Activated CD8-positive, alpha-beta memory T cell treated with anti-CD3 and anti-CD28 coated beads, Interleukin-2, amount 10 ng/mL, durations not matched to agents 7 days and 5 days (primary cell): ENCODE measurements at regions of chr20 and their contacts with region 1.

Region 1: DNA sequence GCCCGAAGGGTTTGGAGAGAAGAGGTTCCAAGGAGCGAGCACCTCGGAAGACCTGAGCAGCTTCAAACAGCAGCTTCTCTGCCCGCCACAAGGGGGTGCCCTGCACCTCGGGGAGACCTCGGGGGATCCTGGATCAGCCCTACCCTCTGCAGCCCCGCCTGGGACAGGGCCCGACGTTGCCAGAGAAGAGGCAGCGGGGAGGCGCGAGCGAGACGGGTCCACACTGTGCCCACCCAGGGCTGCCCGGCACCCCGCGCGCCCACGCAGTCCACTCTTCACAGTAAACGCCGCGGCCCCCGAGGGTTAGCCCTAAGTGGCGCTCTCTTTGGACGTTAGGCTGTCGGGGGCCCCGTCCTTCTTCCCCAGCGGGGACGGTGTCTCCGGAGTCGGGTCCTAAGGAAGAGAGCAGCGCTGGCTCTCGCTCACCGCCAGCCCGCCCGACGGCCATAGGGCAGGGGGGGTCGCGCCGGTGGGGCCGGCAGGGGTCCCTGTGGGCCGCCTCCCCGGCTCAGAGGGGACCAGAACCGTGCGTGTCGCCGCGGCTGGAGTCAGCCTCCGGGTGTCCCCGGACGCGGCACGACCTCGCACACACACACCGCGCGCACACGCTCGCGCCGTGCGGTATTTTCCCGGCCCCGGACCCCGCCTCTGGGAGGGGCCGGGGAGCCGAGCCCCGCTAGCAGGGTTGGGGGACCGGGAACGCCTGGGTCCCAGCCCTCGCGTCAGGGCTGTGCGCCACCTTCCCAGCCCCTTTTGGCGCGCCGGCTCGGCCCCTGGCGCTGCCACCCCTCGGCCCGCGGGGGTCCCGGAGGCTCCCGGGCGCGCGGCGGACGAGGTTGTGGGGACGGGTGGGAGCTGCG is 929 bp downstream of the CDH22 start:
- DNase-seq: peak; percentile 80
- ATAC-seq: peak; percentile 87
- H3K4me3 Mint-ChIP-seq: no peak overlapping the region
- H3K27ac Mint-ChIP-seq: no peak overlapping the region
- H3K4me1 Mint-ChIP-seq: peaks cover 5% of the 10 kb centered on the region
- H3K27me3 Mint-ChIP-seq: peaks cover 67% of the 10 kb centered on the region

Region 2: DNA sequence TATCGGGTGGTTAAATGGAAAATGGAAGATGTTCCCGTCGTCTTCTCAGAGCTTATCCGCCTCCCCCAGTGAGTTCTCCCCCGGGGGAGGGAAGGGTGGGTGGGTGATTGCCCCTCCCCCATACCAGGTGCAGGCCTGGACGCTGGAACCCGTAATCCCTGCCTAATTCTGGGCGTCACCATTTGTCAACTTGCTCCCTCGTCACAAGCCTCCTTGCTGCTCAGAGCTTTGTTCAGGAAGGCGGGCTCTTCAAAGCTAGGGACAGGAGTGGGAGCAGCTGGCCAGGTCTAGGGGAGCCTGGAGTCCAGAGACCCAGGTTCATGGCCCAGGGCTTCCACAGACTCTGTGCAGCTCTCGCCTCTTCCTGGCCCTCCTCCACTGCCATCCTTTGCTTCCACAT is 24.7 kb before region 1 on chr20:
- CTCF ChIA-PET with region 1: no interaction called
- DNase-seq: no peak
- ATAC-seq: no peak
- H3K4me3 Mint-ChIP-seq: no peak overlapping the region
- H3K27ac Mint-ChIP-seq: no peak overlapping the region
- H3K4me1 Mint-ChIP-seq: no peaks in the 10 kb centered on the region
- H3K27me3 Mint-ChIP-seq: peaks cover 39% of the 10 kb centered on the region

Region 3: DNA sequence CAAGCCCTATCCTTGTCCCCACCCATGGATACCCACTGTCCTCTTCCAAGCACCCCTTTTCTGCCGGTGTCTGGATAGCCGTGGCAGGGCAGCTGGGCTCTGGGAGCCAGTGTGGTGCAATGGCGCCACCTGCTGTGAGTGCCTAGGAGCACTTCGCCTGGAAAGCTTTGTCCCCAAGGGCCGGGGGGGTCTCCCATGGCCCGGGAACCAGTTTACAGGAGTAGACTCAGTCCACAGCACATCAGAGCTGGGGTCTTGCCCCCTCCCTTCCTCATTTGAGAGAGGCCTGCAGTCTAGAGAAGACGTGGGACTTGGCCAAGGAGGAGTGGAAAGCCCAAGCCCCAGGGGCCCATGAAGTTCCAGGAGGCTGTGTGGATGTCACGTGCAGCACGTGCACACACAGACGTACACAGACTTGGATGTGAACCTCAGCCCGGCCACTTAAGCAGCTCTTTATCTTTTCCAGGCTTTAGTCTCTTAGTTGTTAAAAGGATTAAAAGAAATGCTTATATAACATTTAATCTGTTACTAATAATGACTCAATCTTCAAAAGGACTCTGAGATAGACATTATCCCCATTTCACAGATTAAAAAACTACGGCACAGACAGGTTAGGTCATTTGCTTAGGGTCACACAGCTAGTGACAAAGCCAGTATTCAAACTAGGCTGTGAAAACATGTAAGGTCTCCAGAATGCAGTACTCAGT is 41.8 kb after region 1 on chr20:
- CTCF ChIA-PET with region 1: interaction called, 36 read pairs
- DNase-seq: peak; percentile 66
- ATAC-seq: peak; percentile 56
- H3K4me3 Mint-ChIP-seq: no peak overlapping the region
- H3K27ac Mint-ChIP-seq: peak overlapping the region; percentile 42
- H3K4me1 Mint-ChIP-seq: peaks cover 14% of the 10 kb centered on the region
- H3K27me3 Mint-ChIP-seq: peaks cover 3% of the 10 kb centered on the region

Region 4: GRCh38 chr20:46411637-46412036 is 104.3 kb after region 1 on chr20:
- CTCF ChIA-PET with region 1: interaction called, 20 read pairs
- DNase-seq: no peak
- ATAC-seq: no peak
- H3K4me3 Mint-ChIP-seq: no peak overlapping the region
- H3K27ac Mint-ChIP-seq: no peak overlapping the region
- H3K4me1 Mint-ChIP-seq: peaks cover 31% of the 10 kb centered on the region
- H3K27me3 Mint-ChIP-seq: peaks cover 29% of the 10 kb centered on the region

Region 5: DNA sequence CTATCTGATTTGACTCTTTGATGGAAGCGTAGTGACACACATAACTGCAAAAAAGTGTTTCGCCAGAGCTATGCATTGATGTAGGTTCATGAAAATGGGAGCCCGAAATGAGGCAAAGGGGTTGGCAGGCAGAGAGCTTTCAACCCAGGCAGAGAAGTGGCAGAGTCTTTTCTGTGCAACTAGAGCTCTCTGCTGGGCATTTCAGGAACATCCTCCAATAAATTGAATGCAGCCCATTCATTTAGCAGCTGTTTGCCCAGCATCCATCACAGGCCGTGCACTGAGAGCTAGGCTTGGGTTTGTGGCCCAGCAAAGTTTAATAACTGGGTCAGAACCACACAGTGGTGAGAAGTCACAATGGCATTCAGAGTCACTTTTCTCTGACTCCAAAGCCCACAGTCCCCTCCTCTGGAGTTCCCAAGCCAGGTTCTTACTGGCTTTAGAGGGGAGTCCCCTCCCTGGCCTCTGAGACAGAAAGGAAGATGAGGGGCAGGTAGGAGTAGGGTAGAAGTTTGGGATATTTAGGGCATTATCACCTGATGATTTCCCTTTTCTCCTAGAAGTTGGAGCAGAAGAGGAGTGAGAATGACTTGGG is 130.9 kb after region 1 on chr20:
- CTCF ChIA-PET with region 1: interaction called, 11 read pairs
- DNase-seq: no peak
- ATAC-seq: no peak
- H3K4me3 Mint-ChIP-seq: no peak overlapping the region
- H3K27ac Mint-ChIP-seq: no peak overlapping the region
- H3K4me1 Mint-ChIP-seq: no peaks in the 10 kb centered on the region
- H3K27me3 Mint-ChIP-seq: peaks cover 29% of the 10 kb centered on the region